ENCODE measurements at regions of chr16 and their contacts with region 1.

Region 1: GRCh38 chr16:69123910-69124309 is 8.5 kb downstream of the CHTF8 start:
- DNase-seq: peak in 1 of 2 donors; percentile 74
- ATAC-seq: peak; percentile 75

Region 2: DNA sequence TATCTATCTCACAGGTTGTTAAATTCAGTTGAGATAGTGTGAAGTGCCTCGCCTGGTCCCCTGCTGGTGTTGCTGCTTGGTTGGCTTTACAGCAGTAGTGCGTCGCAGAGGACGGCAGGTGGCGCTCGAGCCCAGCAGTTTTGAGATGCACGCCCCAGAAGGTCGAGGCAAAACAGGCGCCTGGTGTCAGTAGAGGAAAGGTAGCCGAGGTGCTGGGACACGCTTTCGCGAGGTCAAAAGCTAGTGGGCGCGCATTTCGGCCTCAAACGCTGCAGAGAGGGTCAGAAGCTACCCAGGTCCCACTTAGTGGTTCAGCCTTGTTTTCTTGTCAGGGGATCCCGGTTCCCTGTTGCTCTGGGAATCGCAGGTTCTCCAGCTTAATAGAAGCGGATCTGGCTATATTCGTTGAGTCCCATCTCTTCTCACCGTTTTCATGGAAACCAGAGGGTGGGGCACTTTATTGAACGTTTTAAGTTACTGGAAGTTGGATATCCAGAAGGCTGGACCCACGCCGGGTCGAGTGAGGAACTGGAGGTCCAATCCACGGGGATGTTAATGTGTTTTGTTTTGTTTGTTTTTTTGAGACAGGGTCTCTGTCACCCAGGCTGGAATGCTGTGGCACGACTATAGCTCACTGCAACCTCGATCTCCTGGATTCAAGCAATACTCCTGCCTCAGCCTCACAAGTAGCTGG is 595.1 kb before region 1 on chr16:
- intact Hi-C with region 1: loop called in 1 of 2 experiments (anchors 10 kb)
- DNase-seq: peak; percentile 81 to 87
- ATAC-seq: peak; percentile 84

Region 3: GRCh38 chr16:68704232-68704867 is 419.6 kb before region 1 on chr16:
- intact Hi-C with region 1: loop called in 1 of 2 experiments (anchors 10 kb)
- DNase-seq: peak; percentile 89 to 90
- ATAC-seq: peak; percentile 84

Region 4: DNA sequence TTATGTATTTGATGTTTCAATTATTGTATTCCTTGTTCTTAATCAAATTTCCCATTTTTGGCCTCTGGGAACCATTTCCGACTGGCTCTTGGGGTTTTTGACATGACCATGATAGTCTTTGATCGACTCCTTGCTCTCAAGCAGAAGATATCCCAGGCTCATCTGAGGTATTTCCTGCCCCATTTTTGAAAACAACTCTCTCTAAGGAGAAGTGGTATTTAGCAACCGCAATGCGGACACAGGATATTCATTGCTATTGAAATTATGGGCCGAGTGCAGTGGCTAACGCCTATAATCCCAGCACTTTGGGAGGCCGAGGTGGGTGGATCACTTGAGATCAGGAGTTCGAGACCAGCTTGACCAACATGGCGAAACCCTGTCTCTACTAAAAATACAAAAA is 275.1 kb before region 1 on chr16:
- intact Hi-C with region 1: loop called in 1 of 2 experiments (anchors 5 kb)
- DNase-seq: no peak
- ATAC-seq: no peak

Region 5: DNA sequence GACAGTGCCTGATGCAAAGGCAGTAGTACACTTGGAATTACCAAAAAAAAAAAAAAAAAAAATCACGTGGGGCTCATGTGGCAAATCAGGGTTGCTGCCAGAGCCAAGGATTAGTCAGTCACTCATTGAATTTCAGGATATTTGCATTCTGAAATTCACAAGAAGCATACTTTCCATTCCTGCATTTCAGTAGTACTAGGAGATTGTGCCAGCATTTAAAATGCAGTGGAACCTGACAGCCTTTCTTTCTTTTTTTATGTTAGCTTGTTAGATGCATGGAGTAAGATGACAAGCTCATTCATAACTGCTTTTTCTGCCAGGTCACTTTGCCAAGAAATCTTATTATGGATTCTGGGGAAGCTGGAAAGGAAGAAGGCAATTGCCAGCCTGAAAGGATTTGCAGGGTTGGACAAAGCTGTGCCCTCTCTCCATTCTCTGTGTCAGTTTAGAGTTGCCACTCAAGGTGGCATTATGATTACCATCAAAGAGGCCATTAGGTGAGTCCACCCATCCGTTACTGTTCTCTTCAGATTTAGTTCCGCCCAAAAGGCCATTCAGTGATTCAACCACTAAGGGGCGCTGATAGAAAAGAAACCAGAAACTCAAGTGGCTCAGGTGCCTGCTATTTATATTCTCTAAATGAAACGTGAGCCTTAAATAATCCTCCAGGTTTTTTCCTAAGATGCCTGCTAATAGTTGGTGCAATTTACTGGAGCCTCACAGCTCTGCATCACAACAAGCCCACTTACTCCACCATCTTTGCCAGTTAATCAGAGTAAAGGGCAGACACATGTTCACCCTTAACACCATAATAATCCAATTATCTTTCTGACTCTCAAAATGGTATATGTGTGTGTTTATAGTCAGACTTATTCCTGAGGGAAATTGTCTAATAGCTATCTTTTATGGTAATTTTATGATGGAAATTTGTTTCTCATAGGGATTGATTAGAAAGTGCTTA is 221.6 kb before region 1 on chr16:
- intact Hi-C with region 1: loop called in 1 of 2 experiments (anchors 10 kb)
- DNase-seq: peak in 1 of 2 donors; percentile 35
- ATAC-seq: peak; percentile 94